Posterior vena cava (tissue), 2 donors: ENCODE measurements at regions of chr2 and their contacts with region 1.

Region 1: DNA sequence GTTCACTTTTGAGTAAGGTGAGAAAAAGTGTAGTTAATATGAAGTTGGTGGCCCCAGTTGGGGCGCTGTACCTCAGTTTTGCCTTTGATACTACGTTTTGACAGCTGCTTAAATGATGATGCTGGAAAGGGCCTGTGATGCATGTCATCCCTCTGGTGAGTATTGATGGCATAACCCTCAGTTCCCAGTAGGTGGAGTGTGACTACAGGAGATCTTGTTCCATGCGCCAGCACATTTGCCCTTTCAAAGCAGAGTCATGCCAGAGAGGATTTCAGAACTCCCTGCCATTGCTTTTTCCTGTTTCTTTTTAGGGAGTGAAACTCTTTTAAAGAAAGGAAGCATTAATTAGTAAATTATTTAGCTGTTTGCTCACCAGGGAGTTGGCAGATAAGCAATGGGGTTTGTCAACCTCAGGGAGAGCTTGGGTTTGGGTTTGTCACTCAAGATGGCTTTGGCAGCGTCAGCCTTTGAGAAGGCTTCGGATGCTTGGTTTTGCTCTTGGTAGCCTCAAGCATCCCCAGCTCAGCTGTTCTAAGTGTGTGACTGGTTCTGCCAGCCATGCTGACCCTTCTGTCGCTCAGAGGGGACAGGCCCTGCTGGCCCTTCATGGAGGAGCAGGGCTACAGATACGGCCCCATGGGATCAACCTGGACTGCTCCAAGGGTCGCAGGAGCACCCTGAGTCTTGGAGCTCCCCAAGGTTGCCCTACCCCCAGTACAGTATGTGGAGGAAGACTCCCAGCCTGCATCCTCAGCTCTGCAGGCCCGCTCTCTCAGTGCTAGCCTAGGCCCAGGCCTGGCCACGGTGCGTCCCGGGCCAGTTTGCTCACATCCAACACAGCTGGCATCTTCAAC is 29.1 kb downstream of the ARMC9 start:
- DNase-seq: no peak

Region 2: GRCh38 chr2:231191896-231192872 is 35.4 kb before region 1 on chr2:
- intact Hi-C with region 1: no loop called
- DNase-seq: peak; percentile 95

Region 3: GRCh38 chr2:231245253-231246094 is 17.9 kb after region 1 on chr2:
- intact Hi-C with region 1: loop called in 1 of 2 experiments (anchors 2 kb)
- DNase-seq: no peak